Right cardiac atrium (tissue), 5 donors: ENCODE measurements at regions of chr12 and their contacts with region 1.

Region 1: DNA sequence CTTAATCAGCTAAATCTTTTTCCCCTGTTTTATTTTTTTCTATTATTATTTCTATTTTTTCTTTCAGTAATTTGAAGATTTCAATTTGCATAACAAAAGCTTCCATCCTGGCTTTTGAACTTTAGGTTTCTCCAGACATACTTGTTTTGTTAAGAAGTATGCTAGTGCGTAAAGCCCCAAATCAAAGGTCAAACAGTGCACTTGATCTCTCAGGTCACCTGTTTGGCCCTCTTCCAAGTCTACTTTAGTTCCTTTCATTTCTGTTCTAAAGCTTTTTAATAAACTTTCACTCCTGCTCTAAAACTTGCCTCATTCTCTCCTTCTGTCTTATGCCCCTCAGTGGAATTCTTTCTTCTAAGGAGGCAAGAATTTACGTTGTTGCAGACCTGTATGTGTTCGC is 54.6 kb upstream of the ATXN7L3B start:
- DNase-seq: no peak
- ATAC-seq: no peak
- H3K4me3 ChIP-seq: no peak overlapping the region
- H3K27ac ChIP-seq: no peak overlapping the region
- H3K4me1 ChIP-seq: no peaks in the 10 kb centered on the region
- H3K27me3 ChIP-seq: no peaks in the 10 kb centered on the region

Region 2: DNA sequence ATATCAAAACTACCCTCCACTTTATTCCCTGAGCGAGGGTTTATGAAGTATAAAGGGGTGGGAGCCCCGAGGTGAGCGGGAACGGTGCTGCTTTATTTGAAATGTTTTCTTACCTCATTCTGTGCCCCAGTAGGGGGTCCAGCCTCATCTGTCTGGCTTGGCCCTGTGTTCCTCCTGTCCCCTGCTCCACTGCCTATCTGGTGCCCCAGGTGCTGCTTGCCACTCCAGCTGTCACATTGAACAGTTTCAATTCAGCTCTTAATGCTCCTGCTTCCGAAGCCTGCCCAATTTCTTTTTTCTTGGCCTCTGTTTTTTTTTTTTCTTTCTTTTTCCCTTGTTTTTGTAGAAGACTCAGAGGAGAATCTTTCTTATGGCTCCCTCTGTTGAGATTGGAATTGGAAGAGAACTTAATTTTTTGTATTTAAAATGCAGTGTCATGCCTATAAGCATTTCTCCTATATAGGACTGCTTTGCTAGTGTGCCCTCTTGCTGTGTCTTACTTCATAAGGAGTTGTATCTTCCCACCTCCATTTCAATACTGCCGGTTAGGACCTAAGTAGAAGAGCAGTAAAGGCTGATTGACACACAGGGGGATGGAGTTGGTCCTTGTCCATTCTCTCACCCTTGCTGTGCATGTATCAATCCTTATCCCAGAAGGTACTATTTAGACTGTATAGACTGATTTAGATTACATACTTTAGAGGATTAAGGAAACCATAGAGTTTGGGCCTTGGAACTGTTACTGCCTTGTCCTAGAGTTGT is 56.9 kb after region 1 on chr12:
- intact Hi-C with region 1: no loop called
- DNase-seq: no peak
- ATAC-seq: no peak
- H3K4me3 ChIP-seq: peak overlapping the region; percentile 90
- H3K27ac ChIP-seq: no peak overlapping the region
- H3K4me1 ChIP-seq: peaks cover 14% of the 10 kb centered on the region
- H3K27me3 ChIP-seq: no peaks in the 10 kb centered on the region

Region 3: GRCh38 chr12:74563927-74564326 is 80.9 kb after region 1 on chr12:
- intact Hi-C with region 1: loop called in 1 of 4 experiments (anchors 5 kb)
- DNase-seq: no peak
- ATAC-seq: no peak
- H3K4me3 ChIP-seq: no peak overlapping the region
- H3K27ac ChIP-seq: no peak overlapping the region
- H3K4me1 ChIP-seq: no peaks in the 10 kb centered on the region
- H3K27me3 ChIP-seq: no peaks in the 10 kb centered on the region